Upper lobe of right lung (tissue), 1 donor: ENCODE measurements at regions of chr21 and their contacts with region 1.

Region 1: GRCh38 chr21:25881525-25882376 is 147.0 kb downstream of the GABPA start:
- DNase-seq: peak; percentile 77
- ATAC-seq: peak; percentile 95
- H3K4me3 ChIP-seq: no peak overlapping the region
- H3K27ac ChIP-seq: no peak overlapping the region
- H3K4me1 ChIP-seq: no peaks in the 10 kb centered on the region
- H3K27me3 ChIP-seq: no peaks in the 10 kb centered on the region
- CTCF ChIP-seq: peak; percentile 97

Region 2: DNA sequence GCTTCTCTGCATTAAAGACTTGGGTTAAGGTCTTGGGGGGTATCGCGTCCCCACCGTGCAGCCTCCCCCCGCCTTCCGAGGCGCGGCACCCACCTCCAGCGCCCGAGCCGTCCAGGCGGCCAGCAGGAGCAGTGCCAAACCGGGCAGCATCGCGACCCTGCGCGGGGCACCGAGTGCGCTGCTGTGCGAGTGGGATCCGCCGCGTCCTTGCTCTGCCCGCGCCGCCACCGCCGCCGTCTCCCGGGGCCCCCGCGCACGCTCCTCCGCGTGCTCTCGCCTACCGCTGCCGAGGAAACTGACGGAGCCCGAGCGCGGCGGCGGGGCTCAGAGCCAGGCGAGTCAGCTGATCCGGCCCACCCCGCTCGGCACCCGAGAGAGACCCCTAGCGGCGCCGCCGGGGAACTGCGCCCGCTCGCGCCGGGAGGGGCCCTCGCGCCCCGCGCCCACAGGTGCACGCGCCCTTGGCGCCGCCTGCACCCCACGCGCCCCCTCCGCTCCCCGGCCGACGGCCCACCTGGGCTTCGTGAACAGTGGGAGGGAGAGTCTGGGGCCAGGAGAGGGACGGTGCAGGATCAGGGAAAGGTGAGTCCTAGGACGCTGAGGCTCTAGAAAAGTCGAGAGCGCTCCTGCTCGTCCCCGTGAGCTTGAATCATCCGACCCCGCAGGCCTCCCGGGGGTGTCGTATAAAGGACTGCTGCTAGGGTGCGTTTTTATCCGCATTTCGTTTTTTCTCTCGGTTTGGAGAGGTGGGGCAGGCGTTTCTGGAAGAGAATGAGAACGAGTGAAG is 288.9 kb after region 1 on chr21 and contains the start of gene APP:
- intact Hi-C with region 1: loop called (anchors 10 kb)
- DNase-seq: peak; percentile 94
- ATAC-seq: peak; percentile 96
- H3K4me3 ChIP-seq: peak within 1 kb of the TSS; percentile 93
- H3K27ac ChIP-seq: peak within 1 kb of the TSS; percentile 85
- H3K4me1 ChIP-seq: peaks cover 24% of the 10 kb centered on the region
- H3K27me3 ChIP-seq: no peaks in the 10 kb centered on the region
- CTCF ChIP-seq: peak; percentile 94
- total RNA-seq, gene APP: 480 TPM